ENCODE measurements at regions of chr14 and their contacts with region 1.

Region 1: GRCh38 chr14:21978184-21978998 is 304.8 kb upstream of the OR4E1 start:
- DNase-seq: peak; percentile 78
- H3K4me3 Mint-ChIP-seq: peak overlapping the region; percentile 76
- H3K27ac Mint-ChIP-seq: peak overlapping the region; percentile 76
- H3K4me1 Mint-ChIP-seq: peaks cover 26% of the 10 kb centered on the region
- H3K27me3 Mint-ChIP-seq: no peaks in the 10 kb centered on the region

Region 2: DNA sequence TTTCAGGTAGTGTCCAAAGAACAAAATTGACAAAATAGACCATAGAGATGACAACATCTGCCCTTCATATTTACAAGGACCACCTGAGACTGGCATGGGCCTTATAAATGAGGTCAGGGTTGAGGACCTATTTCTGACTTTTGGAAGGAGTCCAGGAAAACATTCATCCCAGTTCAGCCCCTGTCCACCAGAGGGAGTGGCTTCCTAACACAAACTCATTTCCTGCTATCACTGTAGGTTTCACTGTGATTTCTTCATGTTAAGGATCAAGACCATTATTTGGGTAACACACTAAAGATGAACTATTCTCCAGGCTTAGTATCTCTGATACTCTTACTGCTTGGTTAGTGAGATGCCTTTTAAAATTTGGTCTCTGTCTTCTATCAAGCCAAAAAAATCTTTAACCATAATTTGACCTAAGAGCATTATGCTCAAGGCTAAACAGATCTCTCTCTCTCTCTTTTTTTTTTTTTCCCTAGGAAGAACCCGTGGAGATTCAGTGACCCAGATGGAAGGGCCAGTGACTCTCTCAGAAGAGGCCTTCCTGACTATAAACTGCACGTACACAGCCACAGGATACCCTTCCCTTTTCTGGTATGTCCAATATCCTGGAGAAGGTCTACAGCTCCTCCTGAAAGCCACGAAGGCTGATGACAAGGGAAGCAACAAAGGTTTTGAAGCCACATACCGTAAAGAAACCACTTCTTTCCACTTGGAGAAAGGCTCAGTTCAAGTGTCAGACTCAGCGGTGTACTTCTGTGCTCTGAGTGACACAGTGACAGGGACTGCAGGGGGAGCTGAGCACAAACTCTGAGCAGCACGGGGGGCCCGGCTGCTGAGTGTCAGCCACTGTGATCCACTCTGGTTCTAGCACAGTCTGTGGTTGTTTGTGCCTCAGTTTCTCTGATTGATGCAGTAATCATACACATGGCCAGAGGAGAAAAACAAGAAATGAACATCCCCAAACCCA is 37.2 kb before region 1 on chr14:
- CTCF ChIA-PET with region 1: interaction called, 6 read pairs
- intact Hi-C with region 1: loop called (anchors 5 kb)
- DNase-seq: peak; percentile 64
- H3K4me3 Mint-ChIP-seq: peak overlapping the region; percentile 78
- H3K27ac Mint-ChIP-seq: peak overlapping the region; percentile 81
- H3K4me1 Mint-ChIP-seq: peaks cover 25% of the 10 kb centered on the region
- H3K27me3 Mint-ChIP-seq: no peaks in the 10 kb centered on the region

Region 3: DNA sequence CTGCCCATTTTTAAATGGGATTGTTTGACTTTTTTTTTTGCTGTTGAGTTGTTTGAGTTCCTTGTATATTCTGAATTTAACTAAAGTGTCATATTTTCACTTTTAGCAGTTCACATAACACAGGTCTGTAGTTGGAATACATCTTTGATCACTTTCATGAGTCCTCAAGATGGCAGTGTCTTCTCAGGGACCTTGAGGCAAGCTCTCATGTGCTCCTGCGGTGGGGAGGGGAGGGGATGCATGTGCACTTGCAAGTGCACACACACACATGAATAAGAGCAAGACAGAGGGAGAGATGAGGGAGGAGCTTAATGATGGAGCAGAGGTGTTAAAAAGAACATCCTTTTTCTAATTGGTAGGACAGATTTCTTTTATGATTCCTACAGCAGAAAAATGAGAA is 13.3 kb before region 1 on chr14:
- CTCF ChIA-PET with region 1: interaction called, 16 read pairs
- intact Hi-C with region 1: no loop called
- DNase-seq: peak; percentile 71
- H3K4me3 Mint-ChIP-seq: peak overlapping the region; percentile 50
- H3K27ac Mint-ChIP-seq: peak overlapping the region; percentile 80
- H3K4me1 Mint-ChIP-seq: peaks cover 18% of the 10 kb centered on the region
- H3K27me3 Mint-ChIP-seq: no peaks in the 10 kb centered on the region

Region 4: DNA sequence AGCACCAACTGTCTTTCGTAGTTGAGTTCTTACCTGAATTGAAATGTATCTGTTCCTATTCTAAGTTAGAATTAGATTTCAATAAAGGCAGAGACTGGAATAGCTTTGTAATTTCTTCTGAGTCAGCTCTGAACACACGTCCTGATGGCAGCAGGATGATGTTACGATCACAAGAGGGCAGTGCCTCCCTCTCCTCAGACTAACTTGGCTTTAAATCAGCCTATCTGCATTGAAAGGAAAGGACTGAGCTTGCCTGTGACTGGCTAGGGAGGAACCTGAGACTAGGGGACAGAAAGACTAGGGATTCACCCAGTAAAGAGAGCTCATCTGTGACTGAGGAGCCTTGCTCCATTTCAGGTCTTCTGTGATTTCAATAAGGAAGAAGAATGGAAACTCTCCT is 18.9 kb after region 1 on chr14:
- CTCF ChIA-PET with region 1: interaction called, 12 read pairs
- intact Hi-C with region 1: no loop called
- DNase-seq: peak; percentile 65
- H3K4me3 Mint-ChIP-seq: peak overlapping the region; percentile 92
- H3K27ac Mint-ChIP-seq: peak overlapping the region; percentile 96
- H3K4me1 Mint-ChIP-seq: peaks cover 32% of the 10 kb centered on the region
- H3K27me3 Mint-ChIP-seq: no peaks in the 10 kb centered on the region

Region 5: DNA sequence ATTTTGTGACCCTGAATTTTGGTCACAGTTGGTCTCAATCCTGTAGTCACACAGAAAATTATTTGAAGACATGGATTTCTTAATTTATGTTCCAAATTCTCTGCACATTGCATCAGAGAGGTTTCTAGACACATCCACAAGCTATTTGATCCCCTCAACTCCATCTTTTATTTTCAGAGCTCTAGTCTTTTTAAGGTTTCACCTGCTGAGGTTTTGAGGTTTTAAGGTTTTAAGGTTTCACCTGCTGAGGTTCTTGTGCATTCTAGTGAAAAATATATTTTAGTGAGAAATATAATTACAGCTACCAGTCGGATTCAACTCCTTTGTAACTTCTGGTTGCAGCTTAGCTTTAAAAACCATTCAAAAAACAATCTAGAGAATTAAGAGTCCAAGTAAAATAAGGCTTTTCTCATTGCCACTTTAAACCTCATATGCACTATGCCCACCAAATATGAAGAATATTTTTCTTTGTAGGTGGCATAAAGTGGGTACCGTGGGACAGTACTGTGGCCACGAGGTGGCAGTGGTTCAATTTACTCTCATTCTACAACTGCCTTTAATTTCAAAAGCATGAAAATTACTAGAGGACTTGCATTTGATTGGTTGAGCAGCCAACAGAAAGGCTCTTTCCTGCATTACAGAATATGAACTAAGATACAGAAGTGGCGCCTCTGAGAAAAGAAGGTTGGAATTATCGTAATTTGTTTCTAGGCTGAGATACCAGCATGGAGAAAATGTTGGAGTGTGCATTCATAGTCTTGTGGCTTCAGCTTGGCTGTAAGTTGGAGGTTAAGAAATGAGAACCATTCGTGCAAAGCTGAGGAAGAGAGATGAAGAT is 61.8 kb after region 1 on chr14:
- CTCF ChIA-PET with region 1: interaction called, 13 read pairs
- intact Hi-C with region 1: no loop called
- DNase-seq: peak; percentile 70
- H3K4me3 Mint-ChIP-seq: peak overlapping the region; percentile 69
- H3K27ac Mint-ChIP-seq: peak overlapping the region; percentile 90
- H3K4me1 Mint-ChIP-seq: peaks cover 16% of the 10 kb centered on the region
- H3K27me3 Mint-ChIP-seq: no peaks in the 10 kb centered on the region